Left cardiac atrium (tissue), 4 donors: ENCODE measurements at regions of chr16 and their contacts with region 1.

Region 1: DNA sequence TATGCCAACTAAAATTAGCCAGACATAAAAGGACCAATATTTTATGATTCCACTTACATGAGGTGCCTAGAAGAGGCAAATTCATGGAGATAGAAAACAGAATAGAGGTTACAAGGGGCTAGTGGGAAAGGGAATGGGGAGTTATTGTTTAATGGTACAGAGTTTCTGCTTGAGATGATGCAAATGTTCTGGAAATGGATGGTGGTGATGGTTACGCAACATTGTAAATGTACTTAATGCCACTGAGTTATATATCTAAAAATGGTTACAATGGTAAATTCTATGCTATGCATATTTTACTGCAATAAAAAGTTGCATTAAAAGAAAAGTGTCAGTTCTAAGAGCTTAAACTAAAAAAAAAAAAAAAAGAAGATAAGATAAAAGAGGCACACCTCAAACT is 17.9 kb downstream of the MT1X start:
- DNase-seq: no peak
- ATAC-seq: no peak

Region 2: DNA sequence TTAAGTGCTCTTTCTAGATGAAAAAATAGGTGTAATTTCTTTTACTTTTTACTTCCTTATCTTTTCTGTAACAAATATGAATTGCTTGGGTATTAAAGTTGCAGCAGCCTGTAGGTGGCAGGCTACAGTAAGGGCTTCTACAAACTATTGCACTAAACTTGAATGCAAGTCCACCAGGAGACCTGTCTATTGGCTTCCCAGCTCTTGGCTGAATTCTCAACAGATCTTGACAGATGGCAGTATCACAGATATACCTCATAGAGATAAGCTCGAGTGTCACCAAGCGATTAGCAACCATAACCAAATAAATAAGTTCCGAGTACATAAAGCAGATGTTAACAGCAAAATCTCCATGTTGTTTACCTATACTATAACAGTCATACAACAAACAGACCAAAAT is 186.2 kb before region 1 on chr16:
- intact Hi-C with region 1: loop called (anchors 2 to 10 kb)
- DNase-seq: no peak
- ATAC-seq: peak; percentile 60 to 66

Region 3: DNA sequence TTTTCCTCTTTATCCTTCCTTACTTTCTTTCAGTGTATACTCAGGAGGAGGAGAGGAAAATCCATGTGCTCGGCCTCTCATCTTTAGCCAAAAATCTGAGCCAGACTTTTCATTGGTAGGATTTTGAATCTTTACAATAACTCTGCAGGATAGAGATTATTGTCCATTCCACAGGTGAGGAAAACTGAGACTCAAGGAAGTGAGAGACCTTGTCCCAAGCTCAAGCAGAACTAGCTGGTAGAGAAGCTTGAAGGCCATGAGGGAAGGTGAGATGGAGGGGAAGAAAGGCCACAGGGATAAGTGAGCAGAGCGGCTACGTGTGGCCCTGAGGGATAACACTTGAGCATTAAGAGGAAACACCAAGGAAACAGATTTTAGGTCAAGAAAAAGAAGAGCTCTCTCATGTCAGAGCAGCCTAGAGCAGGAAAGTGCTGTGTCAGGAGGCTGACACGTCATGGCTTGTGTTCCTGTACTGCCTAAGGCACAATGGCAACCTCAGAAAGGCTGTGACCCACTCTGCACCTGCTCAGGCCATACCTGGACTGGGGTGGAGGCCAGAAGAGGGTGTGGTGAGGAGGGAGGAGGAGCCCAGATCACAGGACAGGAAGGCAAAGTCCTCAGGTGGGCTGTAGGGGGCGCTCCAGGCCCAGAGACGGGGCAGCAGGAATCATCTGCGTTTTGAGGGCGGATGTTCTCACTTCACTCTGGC is 123.5 kb before region 1 on chr16:
- intact Hi-C with region 1: loop called (anchors 5 to 10 kb)
- DNase-seq: peak; percentile 74
- ATAC-seq: peak; percentile 90 to 94

Region 4: GRCh38 chr16:56600398-56600999 is 99.7 kb before region 1 on chr16:
- intact Hi-C with region 1: loop called (anchors 2 to 5 kb)
- DNase-seq: no peak
- ATAC-seq: peak; percentile 14 to 65

Region 5: GRCh38 chr16:56673921-56674320 is 26.3 kb before region 1 on chr16:
- intact Hi-C with region 1: loop called in 1 of 2 experiments (anchors 1 kb)
- DNase-seq: no peak
- ATAC-seq: peak; percentile 22 to 50